ENCODE measurements at regions of chr6 and their contacts with region 1.

Region 1: GRCh38 chr6:129236001-129236517 is 353.1 kb downstream of the LAMA2 start:
- DNase-seq: no peak
- H3K4me3 ChIP-seq: no peak overlapping the region
- H3K27ac ChIP-seq: no peak overlapping the region
- H3K4me1 ChIP-seq: peaks cover 37% of the 10 kb centered on the region
- CTCF ChIP-seq: no peak

Region 2: GRCh38 chr6:129359811-129360681 is 124.0 kb after region 1 on chr6:
- CTCF ChIA-PET with region 1: no interaction called
- POLR2A ChIA-PET with region 1: no interaction called
- intact Hi-C with region 1: loop called (anchors 5 kb)
- DNase-seq: no peak
- H3K4me3 ChIP-seq: no peak overlapping the region
- H3K27ac ChIP-seq: no peak overlapping the region
- H3K4me1 ChIP-seq: peaks cover 4% of the 10 kb centered on the region
- CTCF ChIP-seq: no peak

Measured in OCI-LY7 (cell line).